Aorta (tissue), 5 donors: ENCODE measurements at regions of chr9 and their contacts with region 1.

Region 1: DNA sequence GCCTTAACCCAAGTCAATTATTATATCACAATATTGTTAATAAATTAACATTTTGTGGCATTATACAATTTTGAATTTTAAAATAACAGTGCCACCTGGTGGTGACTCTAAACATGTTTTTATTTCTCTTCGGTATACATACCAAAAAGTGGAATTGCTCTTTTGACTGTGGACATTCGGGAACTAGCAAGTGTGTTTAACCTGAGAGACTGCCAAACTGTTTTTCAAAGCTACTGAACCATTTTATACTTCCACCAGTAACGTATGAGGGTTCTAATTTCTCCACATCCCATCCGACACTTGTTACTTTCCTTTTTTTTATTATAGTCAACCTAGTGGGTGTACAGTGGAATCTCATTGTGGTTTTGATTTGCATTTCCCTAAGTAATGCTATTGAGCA is 18.3 kb upstream of the HSDL2 start:
- DNase-seq: no peak
- ATAC-seq: no peak
- H3K4me3 ChIP-seq: no peak overlapping the region
- H3K27ac ChIP-seq: no peak overlapping the region
- H3K4me1 ChIP-seq: no peaks in the 10 kb centered on the region
- H3K27me3 ChIP-seq: no peaks in the 10 kb centered on the region

Region 2: DNA sequence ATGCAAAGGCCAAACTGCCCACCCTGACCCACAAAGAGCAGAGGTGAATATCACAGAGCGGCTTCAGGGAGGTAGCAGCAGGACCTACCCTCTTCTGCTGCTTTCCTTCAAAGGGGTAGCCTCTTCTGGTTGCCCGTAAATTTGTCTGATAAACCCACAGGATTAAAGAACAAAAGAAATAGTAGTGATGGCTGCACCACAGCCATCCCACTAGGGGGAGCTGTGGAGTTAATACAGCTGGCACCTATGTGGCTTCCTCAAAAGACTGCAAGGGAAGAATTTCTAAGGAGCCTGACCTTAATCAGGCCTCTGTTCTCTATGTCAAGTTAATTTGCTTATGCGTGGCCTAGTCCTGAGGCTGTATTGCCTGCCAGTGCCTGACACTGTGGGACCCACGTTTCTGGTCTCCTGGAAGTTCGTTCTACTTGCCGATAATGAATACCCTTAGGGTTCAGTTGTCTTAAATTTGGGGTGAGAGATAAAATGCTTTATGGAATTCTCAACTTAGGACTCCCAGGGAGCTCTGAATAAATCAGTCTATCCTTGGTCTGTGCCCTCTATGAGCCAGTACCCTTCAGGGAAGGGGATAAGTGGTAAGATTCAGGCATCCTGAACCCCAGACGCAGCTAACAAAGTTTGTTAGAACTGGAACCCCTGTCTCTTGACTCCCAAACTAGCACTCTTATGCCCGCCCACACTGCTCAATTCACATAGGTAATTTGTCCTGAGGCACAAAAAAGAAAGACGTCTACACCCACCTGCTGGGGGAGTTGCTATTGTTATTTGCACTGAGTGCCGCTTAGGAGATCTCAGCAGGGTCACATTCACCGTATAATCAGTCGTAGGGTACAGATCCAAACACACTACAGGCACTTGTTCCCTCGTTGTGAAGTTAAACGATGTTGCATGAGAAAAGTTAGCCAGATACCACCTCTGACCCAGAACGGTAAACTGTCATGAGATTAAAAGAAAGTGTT is 263.6 kb before region 1 on chr9:
- intact Hi-C with region 1: loop called (anchors 1 to 5 kb)
- DNase-seq: peak in 1 of 2 donors; percentile 63
- ATAC-seq: peak; percentile 81
- H3K4me3 ChIP-seq: no peak overlapping the region
- H3K27ac ChIP-seq: no peak overlapping the region
- H3K4me1 ChIP-seq: no peaks in the 10 kb centered on the region
- H3K27me3 ChIP-seq: no peaks in the 10 kb centered on the region

Region 3: DNA sequence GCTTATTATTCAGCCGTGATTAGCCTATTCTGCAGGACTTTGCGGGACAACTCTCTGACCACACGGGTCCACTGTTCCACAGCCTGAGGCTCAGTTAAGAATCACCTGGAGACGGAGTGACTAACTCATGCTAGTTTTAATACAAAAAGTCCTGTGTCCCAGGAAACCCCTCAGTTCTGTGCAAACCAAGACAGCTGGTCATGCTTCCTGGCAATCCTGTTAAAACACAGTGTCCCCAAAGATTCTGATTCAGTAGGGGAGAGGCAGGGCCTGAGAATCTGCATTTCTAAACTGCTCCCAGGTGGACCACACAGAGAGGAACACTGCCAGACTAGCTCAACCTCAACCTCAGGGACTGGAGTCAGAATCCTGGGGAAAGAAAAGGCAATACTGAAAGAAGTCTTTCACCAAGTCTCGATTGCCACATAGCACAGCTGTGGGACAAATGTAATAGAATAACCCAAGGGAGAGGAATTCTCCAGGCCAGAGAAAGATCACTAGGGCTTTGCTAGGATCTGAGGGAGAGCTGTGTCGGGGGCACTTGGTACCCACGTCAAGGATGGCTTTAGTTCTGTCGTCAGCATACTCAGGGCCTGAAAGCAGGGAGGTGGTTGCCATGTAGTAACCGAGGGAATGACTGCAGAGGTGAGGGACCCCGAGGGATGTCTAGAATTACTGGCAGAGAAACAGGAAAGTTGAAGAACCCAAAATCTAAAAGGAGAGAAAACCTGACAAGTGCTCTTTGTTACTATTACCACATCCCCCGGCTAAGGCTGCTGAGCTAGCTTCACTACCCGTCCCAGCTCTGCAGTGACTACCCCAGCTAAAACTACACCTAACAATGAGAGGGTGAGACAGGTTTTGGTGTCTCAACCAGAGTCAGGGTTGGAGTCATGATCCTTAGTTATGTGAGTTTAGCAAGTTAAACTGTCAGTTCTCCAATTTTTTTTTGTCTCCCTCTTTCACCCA is 195.1 kb before region 1 on chr9:
- intact Hi-C with region 1: loop called in 1 of 2 experiments (anchors 5 kb)
- DNase-seq: no peak
- ATAC-seq: peak; percentile 63
- H3K4me3 ChIP-seq: no peak overlapping the region
- H3K27ac ChIP-seq: no peak overlapping the region
- H3K4me1 ChIP-seq: no peaks in the 10 kb centered on the region
- H3K27me3 ChIP-seq: no peaks in the 10 kb centered on the region